ENCODE measurements at regions of chr2 and their contacts with region 1.

Region 1: DNA sequence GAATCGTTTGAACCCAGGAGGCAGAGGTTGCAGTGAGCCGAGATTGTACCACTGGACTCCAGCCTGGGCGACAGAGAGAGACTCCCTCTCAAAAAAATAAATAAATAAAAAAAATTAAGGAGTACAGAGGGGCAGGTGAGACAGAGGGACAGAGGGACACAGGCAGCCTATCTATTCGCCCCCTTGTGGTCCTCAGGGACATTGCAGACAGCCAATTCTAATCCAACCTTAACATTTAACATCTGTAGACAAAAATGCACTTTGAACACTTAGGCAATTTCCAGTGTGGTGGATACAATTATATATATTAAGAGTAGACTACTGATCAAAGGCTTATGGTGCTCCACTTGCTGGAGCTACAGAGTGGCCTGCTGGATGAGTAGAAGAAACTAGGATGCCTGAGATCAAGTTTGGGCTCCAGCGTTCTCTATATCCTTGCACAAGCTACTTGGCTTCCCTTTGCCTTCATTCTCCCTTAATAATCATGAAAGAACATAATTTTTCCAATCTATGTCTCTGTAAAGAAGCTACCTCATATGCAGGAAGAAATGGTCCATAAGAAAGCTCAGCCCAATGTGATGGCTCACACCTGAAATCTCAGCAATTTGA is 8.2 kb upstream of the SMARCAL1 start:
- DNase-seq: peak; percentile 65
- ATAC-seq: peak; percentile 84
- H3K4me3 Mint-ChIP-seq: no peak overlapping the region
- H3K27ac Mint-ChIP-seq: no peak overlapping the region
- H3K4me1 Mint-ChIP-seq: no peaks in the 10 kb centered on the region
- H3K27me3 Mint-ChIP-seq: no peaks in the 10 kb centered on the region
- CTCF ChIP-seq: peak; percentile 83

Region 2: GRCh38 chr2:216222650-216223352 is 181.3 kb before region 1 on chr2:
- CTCF ChIA-PET with region 1: interaction called, 22 read pairs
- POLR2A ChIA-PET with region 1: no interaction called
- intact Hi-C with region 1: loop called (anchors 2 kb)
- DNase-seq: peak; percentile 29
- ATAC-seq: peak; percentile 58
- H3K4me3 Mint-ChIP-seq: no peak overlapping the region
- H3K27ac Mint-ChIP-seq: peak overlapping the region; percentile 36
- H3K4me1 Mint-ChIP-seq: peaks cover 34% of the 10 kb centered on the region
- H3K27me3 Mint-ChIP-seq: no peaks in the 10 kb centered on the region
- CTCF ChIP-seq: no peak

Region 3: DNA sequence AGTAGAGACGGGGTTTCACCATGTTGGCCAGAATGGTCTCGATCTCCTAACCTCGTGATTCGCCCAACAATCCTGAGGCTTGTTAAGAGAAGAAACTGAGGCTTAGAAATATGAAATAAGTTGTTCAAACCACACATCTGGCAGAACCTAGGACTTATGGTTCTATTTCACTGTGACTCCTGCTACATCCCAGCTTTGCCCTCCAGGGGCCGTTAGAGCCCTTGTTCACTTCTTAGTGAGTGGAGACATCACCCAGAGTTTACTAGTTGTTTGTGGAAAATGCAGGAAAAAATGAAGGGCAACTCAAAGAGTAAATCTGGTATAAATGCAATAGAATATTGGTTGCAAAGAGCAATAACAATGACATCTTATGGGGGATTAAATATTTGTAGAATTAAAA is 75.8 kb before region 1 on chr2:
- CTCF ChIA-PET with region 1: interaction called, 12 read pairs
- POLR2A ChIA-PET with region 1: no interaction called
- intact Hi-C with region 1: no loop called
- DNase-seq: no peak
- ATAC-seq: no peak
- H3K4me3 Mint-ChIP-seq: no peak overlapping the region
- H3K27ac Mint-ChIP-seq: no peak overlapping the region
- H3K4me1 Mint-ChIP-seq: no peaks in the 10 kb centered on the region
- H3K27me3 Mint-ChIP-seq: no peaks in the 10 kb centered on the region
- CTCF ChIP-seq: no peak

Region 4: DNA sequence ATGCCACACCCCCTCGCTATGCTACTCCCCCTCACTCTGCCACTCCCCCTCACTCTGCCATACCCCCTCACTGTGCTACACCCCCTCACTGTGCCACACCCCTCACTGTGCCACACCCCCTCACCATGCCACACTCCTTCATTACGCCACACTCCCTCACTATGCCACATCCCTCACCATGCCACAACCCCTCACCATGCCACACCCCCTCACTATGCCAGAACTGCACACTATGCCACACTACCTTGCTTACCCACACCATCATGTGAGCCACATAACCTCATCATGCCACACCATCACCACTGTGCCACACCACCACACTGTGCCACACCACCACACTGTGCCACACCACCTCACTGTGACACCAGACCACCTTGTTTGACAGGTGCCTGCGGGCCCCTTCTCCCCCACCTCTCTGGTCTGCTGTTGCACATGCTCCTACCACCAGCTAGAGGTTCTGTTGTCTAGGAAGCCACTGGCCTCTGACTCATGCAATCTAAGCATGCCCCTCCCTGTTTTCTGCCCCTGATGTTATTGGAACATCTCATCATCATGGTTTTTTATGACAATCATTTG is 53.8 kb before region 1 on chr2:
- CTCF ChIA-PET with region 1: interaction called, 12 read pairs
- POLR2A ChIA-PET with region 1: no interaction called
- intact Hi-C with region 1: loop called (anchors 5 kb)
- DNase-seq: peak; percentile 74
- ATAC-seq: peak; percentile 68
- H3K4me3 Mint-ChIP-seq: no peak overlapping the region
- H3K27ac Mint-ChIP-seq: peak overlapping the region; percentile 50
- H3K4me1 Mint-ChIP-seq: peaks cover 79% of the 10 kb centered on the region
- H3K27me3 Mint-ChIP-seq: no peaks in the 10 kb centered on the region
- CTCF ChIP-seq: no peak

Region 5: GRCh38 chr2:216388046-216388884 is 15.8 kb before region 1 on chr2:
- CTCF ChIA-PET with region 1: interaction called, 11 read pairs
- POLR2A ChIA-PET with region 1: no interaction called
- intact Hi-C with region 1: no loop called
- DNase-seq: peak; percentile 55
- ATAC-seq: peak; percentile 98
- H3K4me3 Mint-ChIP-seq: no peak overlapping the region
- H3K27ac Mint-ChIP-seq: peak overlapping the region; percentile 73
- H3K4me1 Mint-ChIP-seq: peaks cover 17% of the 10 kb centered on the region
- H3K27me3 Mint-ChIP-seq: no peaks in the 10 kb centered on the region
- CTCF ChIP-seq: no peak

Region 6: GRCh38 chr2:216420367-216421101 is 16.4 kb after region 1 on chr2:
- CTCF ChIA-PET with region 1: interaction called, 21 read pairs
- POLR2A ChIA-PET with region 1: no interaction called
- intact Hi-C with region 1: no loop called
- DNase-seq: no peak
- ATAC-seq: no peak
- H3K4me3 Mint-ChIP-seq: no peak overlapping the region
- H3K27ac Mint-ChIP-seq: no peak overlapping the region
- H3K4me1 Mint-ChIP-seq: peaks cover 10% of the 10 kb centered on the region
- H3K27me3 Mint-ChIP-seq: no peaks in the 10 kb centered on the region
- CTCF ChIP-seq: no peak